Right ventricle myocardium superior (tissue), 1 donor: ENCODE measurements at regions of chr12 and their contacts with region 1.

Region 1: DNA sequence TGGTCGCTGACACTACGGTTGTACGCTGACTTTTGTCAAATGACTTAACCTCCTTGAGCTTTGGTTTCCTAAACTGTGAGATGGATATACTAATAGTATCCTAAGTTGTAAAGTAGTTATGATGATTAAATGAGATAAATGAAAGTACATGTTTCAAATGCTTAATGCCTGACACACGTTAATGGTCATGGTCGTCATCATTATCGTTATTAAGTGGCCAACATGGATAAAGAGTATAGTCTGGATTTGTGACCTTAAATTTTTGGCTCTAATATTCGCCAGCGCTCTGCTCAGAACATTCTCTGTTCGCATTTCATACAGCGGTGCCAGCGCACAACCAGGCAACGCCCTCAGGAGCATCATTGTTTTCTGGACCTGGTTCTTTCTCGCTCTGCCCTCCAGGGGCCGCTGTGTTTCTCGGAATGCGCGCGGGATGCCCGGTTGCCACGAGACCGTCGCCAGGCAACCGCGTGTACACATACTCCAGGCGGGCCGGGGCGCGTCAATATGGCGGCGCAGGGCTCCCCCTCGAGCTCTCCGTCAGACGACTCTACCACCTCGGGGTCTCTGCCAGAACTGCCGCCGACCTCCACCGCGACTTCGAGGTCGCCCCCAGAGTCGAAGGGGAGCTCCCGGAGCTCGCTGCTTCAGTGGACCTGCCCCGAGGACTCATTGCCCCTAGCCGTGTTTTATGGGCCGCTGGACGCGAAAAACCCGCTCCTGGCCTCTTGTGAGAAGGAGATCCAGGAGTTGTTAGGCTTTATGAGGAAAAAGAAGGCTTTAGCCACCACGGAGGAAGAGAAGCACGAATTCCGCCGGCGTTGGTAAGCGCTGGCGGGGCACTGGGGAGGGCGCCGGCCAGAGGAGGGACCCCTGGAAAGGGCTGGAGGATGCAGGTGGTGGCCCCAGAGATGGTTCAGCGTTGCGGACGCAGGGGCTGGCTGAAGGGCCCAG is at the start of gene CFAP54:
- DNase-seq: peak; percentile 97
- ATAC-seq: peak; percentile 99
- total RNA-seq, gene CFAP54: 0.13 TPM

Region 2: GRCh38 chr12:96047229-96048211 is 441.9 kb before region 1 on chr12:
- intact Hi-C with region 1: no loop called
- DNase-seq: no peak
- ATAC-seq: peak; percentile 65

Region 3: DNA sequence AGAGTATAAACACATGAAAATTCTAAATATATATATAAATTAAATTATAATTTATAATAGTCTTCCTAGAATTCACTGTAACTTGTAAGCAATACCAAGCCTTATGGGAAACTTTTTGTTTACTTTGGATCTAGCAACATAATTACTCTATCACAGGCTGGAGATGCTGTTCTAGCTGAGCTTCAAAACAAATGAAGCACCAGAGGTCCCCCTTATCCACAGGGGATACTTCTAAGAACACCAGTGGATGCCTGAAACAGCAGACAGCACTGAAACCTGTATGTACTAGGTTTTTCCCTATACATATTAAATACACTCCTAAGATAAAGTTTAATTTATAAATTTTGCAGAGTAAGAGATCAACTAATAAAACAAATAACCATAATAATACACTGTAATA is 185.7 kb before region 1 on chr12:
- intact Hi-C with region 1: loop called (anchors 10 kb)
- DNase-seq: no peak
- ATAC-seq: no peak

Region 4: GRCh38 chr12:96399919-96400797 is 89.2 kb before region 1 on chr12 and contains the start of gene CDK17:
- intact Hi-C with region 1: loop called (anchors 10 kb)
- DNase-seq: peak; percentile 90
- ATAC-seq: peak; percentile 91
- total RNA-seq, gene CDK17: 15.6 TPM